Activated T-helper 2 cell treated with anti-CD3 and anti-CD28 coated beads, Interferon-gamma antibody, Interleukin-2, Interleukin-4, amounts not matched to agents 10 μg/mL and 5 μg/mL and 100 μg/mL, durations not matched to agents 14 hours and 24 hours and 36 hours (primary cell): ENCODE measurements at regions of chr15 and their contacts with region 1.

Region 1: GRCh38 chr15:42273102-42273899 is at the starts of genes GANC and TMEM87A:
- DNase-seq: peak; percentile 96
- H3K4me3 Mint-ChIP-seq: peak within 1 kb of the TSS; percentile 98
- H3K27ac Mint-ChIP-seq: peak within 1 kb of the TSS; percentile 100
- H3K4me1 Mint-ChIP-seq: peaks cover 34% of the 10 kb centered on the region
- H3K27me3 Mint-ChIP-seq: no peaks in the 10 kb centered on the region
- total RNA-seq, gene GANC: 19.5 and 22.4 TPM in 2 replicates
- total RNA-seq, gene TMEM87A: 34.1 and 34.8 TPM in 2 replicates

Region 2: GRCh38 chr15:42194502-42194901 is 78.8 kb before region 1 on chr15:
- intact Hi-C with region 1: loop called (anchors 5 kb)
- DNase-seq: no peak
- H3K4me3 Mint-ChIP-seq: no peak overlapping the region
- H3K27ac Mint-ChIP-seq: peak overlapping the region; percentile 38
- H3K4me1 Mint-ChIP-seq: peaks cover 34% of the 10 kb centered on the region
- H3K27me3 Mint-ChIP-seq: no peaks in the 10 kb centered on the region

Region 3: DNA sequence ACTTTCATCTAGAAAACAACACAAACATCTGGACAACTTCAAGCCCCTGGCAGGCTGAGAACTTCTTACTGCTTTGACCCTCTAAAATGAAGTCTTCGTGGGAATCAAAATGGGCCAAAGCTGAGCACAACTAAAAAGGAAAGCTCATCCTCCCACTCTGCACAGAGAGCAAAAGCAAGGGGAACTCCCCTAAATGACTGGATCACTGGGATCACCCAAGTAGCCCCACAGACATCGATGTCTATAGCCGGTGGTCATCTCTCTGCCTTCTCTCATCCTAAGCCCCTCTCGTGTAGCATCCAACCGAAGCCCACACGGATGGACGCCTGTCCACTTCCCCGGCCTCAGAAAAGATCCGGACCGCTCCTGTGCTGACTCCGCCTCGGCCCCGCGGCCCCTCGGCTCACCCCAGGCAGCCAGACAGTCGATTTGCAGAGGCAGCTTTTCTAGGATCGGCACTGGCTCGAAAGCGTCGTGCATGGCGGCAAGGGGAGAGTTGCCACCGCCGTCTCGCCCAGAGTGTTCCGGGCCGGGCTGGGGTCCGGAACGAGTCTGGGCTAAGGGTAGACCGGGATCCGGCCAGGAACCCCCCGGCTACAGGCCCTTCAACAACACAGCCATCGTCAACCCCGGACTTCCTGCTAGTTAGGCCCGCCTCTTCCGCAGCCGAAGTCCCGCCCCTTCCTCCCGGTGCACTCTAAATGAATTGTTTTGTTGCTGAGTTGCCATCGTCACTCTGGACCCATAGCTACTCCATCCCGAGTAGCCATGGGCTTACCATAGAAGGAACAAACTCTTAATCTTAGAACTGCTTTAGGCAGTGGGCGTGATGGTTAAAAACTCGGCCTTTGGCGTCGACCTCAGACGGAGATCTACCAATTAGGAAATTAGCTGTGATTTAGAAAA is 65.4 kb before region 1 on chr15 and contains the start of gene VPS39:
- intact Hi-C with region 1: loop called (anchors 2 kb)
- DNase-seq: peak; percentile 81
- H3K4me3 Mint-ChIP-seq: peak within 1 kb of the TSS; percentile 98
- H3K27ac Mint-ChIP-seq: peak within 1 kb of the TSS; percentile 98
- H3K4me1 Mint-ChIP-seq: peaks cover 29% of the 10 kb centered on the region
- H3K27me3 Mint-ChIP-seq: no peaks in the 10 kb centered on the region
- total RNA-seq, gene VPS39: 67.7 and 70.6 TPM in 2 replicates

Region 4: GRCh38 chr15:42240814-42241213 is 32.5 kb before region 1 on chr15:
- intact Hi-C with region 1: no loop called
- DNase-seq: no peak
- H3K4me3 Mint-ChIP-seq: no peak overlapping the region
- H3K27ac Mint-ChIP-seq: no peak overlapping the region
- H3K4me1 Mint-ChIP-seq: peaks cover 10% of the 10 kb centered on the region
- H3K27me3 Mint-ChIP-seq: no peaks in the 10 kb centered on the region

Region 5: GRCh38 chr15:42253300-42253699 is 20.0 kb before region 1 on chr15:
- intact Hi-C with region 1: no loop called
- DNase-seq: no peak
- H3K4me3 Mint-ChIP-seq: no peak overlapping the region
- H3K27ac Mint-ChIP-seq: no peak overlapping the region
- H3K4me1 Mint-ChIP-seq: no peaks in the 10 kb centered on the region
- H3K27me3 Mint-ChIP-seq: no peaks in the 10 kb centered on the region

Region 6: DNA sequence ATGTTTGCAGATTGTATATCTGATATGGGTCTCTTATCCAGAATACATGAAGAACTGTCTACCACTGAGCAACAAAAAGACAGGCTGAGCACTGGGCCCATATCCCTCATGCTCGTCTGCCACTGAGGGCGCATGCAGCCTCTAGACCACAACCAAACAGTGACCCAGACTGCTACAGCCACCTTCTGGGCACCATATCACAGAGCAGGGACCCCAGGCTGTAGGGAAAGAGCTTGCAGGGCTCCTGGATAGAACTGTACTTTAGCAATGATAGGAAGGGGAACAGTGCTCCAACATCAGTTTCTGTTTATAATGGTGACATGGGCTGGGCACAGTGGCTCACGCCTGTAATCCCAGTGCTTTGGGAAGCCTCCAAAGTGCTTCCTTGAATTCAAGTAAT is 40.2 kb after region 1 on chr15:
- intact Hi-C with region 1: no loop called
- DNase-seq: no peak
- H3K4me3 Mint-ChIP-seq: no peak overlapping the region
- H3K27ac Mint-ChIP-seq: no peak overlapping the region
- H3K4me1 Mint-ChIP-seq: no peaks in the 10 kb centered on the region
- H3K27me3 Mint-ChIP-seq: no peaks in the 10 kb centered on the region

Region 7: GRCh38 chr15:42495361-42496212 is 222.3 kb after region 1 on chr15 and contains the start of gene SNAP23:
- intact Hi-C with region 1: loop called (anchors 2 kb)
- DNase-seq: peak; percentile 83
- H3K4me3 Mint-ChIP-seq: peak within 1 kb of the TSS; percentile 99
- H3K27ac Mint-ChIP-seq: peak within 1 kb of the TSS; percentile 94
- H3K4me1 Mint-ChIP-seq: peaks cover 56% of the 10 kb centered on the region
- H3K27me3 Mint-ChIP-seq: no peaks in the 10 kb centered on the region
- total RNA-seq, gene SNAP23: 78.0 and 78.9 TPM in 2 replicates

Region 8: DNA sequence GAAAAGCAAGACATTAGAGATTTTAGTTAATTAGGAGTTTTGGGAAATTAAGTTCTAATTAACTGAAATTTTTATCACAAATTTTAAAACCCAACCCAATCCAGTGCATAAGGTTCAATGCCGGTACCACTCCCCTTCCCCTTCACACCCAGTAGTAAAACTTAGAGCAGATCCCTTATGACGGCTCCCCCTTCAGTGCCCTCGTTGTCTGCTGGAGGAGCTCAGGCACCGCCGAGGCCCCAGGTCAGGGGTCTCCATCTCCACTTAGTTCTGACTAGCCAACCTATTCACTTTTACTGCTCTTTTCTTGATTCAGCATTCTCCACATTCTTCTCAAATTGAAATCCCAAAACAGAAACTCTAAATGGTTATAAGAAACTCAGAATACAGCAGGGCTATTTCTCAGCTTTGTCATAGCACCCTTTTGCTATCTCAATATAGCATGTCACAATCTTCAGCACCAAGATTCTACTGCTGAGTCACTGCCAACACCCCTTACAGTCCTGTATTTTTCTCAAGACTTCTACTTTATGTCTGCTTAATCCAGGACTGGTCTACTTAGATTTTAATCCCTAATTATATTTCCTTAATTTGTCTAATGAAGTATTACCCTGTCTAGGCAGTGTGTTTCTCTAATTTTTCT is 1137.4 kb after region 1 on chr15:
- intact Hi-C with region 1: no loop called
- DNase-seq: no peak
- H3K4me3 Mint-ChIP-seq: no peak overlapping the region
- H3K27ac Mint-ChIP-seq: no peak overlapping the region
- H3K4me1 Mint-ChIP-seq: no peaks in the 10 kb centered on the region
- H3K27me3 Mint-ChIP-seq: no peaks in the 10 kb centered on the region